A673 (cell line): ENCODE measurements at regions of chr6 and their contacts with region 1.

Region 1: GRCh38 chr6:128239146-128239545 is 281.3 kb downstream of the PTPRK start:
- DNase-seq: no peak
- H3K4me3 ChIP-seq: no peak overlapping the region
- H3K27ac ChIP-seq: no peak overlapping the region
- H3K4me1 ChIP-seq: peaks cover 29% of the 10 kb centered on the region
- H3K27me3 ChIP-seq: no peaks in the 10 kb centered on the region
- CTCF ChIP-seq: no peak

Region 2: DNA sequence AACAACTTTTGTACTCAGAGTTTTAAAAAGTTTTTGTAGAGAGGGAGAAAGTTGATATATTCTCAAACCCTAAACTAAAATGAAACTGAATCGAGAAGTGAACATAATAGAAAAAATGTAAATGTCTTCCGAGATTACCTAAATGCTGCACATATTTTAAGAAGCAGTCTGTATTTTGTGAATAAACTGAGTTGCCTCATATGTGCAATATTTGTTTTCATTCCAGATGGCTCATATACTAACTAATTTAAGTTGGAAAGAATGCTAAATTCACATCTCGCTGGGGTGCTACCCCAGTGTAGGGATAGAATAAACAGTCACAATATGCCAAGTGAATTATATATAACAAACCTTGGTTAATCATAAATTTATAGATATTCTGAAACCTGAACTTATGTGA is 52.4 kb before region 1 on chr6:
- CTCF ChIA-PET with region 1: no interaction called
- POLR2A ChIA-PET with region 1: no interaction called
- intact Hi-C with region 1: no loop called
- DNase-seq: no peak
- H3K4me3 ChIP-seq: no peak overlapping the region
- H3K27ac ChIP-seq: no peak overlapping the region
- H3K4me1 ChIP-seq: no peaks in the 10 kb centered on the region
- H3K27me3 ChIP-seq: no peaks in the 10 kb centered on the region
- CTCF ChIP-seq: no peak

Region 3: GRCh38 chr6:128432394-128432793 is 193.2 kb after region 1 on chr6:
- CTCF ChIA-PET with region 1: no interaction called
- POLR2A ChIA-PET with region 1: no interaction called
- intact Hi-C with region 1: no loop called
- DNase-seq: no peak
- H3K4me3 ChIP-seq: no peak overlapping the region
- H3K27ac ChIP-seq: peak overlapping the region; percentile 55
- H3K4me1 ChIP-seq: peaks cover 42% of the 10 kb centered on the region
- H3K27me3 ChIP-seq: no peaks in the 10 kb centered on the region
- CTCF ChIP-seq: no peak

Region 4: DNA sequence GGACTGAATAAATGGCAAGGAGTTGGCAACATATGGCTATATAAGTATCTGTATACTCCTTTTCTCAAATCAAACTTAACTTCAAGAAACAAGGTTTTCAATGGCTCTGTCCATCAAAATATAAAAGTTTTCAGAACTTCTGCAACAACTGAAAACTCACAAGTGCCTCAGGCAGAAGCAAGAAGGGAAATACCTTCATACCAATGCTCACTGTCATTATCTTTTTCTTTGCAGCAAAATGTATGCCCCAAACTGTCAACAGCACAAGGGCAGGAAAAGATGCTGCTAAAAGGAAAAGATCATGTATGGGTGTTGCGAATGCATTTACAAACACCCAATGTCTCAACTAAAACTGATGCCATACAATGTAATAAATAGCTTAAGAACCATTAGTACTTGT is 235.3 kb after region 1 on chr6:
- CTCF ChIA-PET with region 1: no interaction called
- POLR2A ChIA-PET with region 1: interaction called, 13 read pairs
- intact Hi-C with region 1: no loop called
- DNase-seq: no peak
- H3K4me3 ChIP-seq: no peak overlapping the region
- H3K27ac ChIP-seq: no peak overlapping the region
- H3K4me1 ChIP-seq: no peaks in the 10 kb centered on the region
- H3K27me3 ChIP-seq: no peaks in the 10 kb centered on the region
- CTCF ChIP-seq: no peak